CD14-positive monocyte (primary cell): ENCODE measurements at regions of chr10 and their contacts with region 1.

Region 1: DNA sequence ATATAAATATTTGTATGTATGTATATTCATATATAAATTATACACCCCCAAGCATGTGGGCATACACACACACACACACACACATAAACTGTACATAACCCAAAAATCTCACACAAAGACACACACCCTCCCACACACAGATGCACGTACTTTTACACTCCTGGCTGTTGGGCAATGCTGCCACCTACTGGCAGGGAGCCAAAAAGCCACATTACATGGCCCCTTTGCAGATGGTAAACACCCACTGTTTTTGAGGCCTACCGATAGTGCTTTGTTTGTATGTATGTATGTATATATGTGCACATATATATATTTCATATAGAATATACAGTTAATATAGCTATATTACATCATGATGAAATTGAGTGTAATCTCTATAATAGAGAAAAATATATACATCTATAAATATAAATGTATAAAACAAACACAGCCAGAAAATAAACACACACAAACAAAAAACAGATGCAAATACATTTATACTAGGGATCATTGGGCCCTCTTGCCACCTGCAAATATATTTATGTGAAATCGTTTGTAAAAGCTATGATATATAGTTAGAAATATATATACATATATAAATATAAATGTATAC is 120.1 kb upstream of the ACBD5 start:
- DNase-seq: peak; percentile 75 to 80 (median 75)
- H3K4me3 ChIP-seq: no peak overlapping the region
- H3K4me3 Mint-ChIP-seq: no peak overlapping the region
- H3K27ac ChIP-seq: no peak overlapping the region
- H3K27ac Mint-ChIP-seq: no peak overlapping the region
- H3K4me1 ChIP-seq: no peaks in the 10 kb centered on the region
- H3K4me1 Mint-ChIP-seq: peaks cover 3% of the 10 kb centered on the region
- H3K27me3 ChIP-seq: no peaks in the 10 kb centered on the region
- H3K27me3 Mint-ChIP-seq: peaks cover 0 to 1% (median 0%) of the 10 kb centered on the region in 3 donors
- CTCF ChIP-seq: peak; percentile 90

Region 2: DNA sequence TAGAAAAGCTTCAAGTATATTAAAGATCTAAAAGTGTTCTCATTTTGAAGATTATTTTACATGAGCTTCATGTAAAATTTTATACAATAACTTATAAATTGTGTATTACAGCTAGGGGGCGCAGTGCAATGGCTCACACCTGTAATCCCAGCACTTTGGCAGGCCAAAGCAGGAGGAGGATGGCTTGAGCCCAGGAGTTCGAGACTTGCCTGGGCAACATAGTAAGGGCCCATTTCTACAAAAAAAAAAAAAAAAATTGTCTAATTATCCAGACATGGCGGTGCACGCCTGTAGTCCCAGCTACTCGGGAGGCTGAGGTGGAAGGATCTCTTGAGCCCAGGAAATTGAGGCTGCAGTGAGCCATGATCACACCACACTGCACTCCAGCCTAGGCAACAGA is 136.7 kb before region 1 on chr10:
- intact Hi-C with region 1: loop called (anchors 5 to 10 kb)
- DNase-seq: peak; percentile 17 to 54 (median 51)
- H3K4me3 ChIP-seq: no peak overlapping the region
- H3K4me3 Mint-ChIP-seq: no peak overlapping the region
- H3K27ac ChIP-seq: no peak overlapping the region
- H3K27ac Mint-ChIP-seq: no peak overlapping the region
- H3K4me1 ChIP-seq: no peaks in the 10 kb centered on the region
- H3K4me1 Mint-ChIP-seq: no peaks in the 10 kb centered on the region
- H3K27me3 ChIP-seq: no peaks in the 10 kb centered on the region
- H3K27me3 Mint-ChIP-seq: peaks cover 0 to 2% (median 0%) of the 10 kb centered on the region in 3 donors
- CTCF ChIP-seq: peak; percentile 84

Region 3: GRCh38 chr10:27252267-27253000 is 108.2 kb before region 1 on chr10:
- intact Hi-C with region 1: loop called in 1 of 2 experiments (anchors 10 kb)
- DNase-seq: peak; percentile 57 to 69 (median 66)
- H3K4me3 ChIP-seq: peak overlapping the region; percentile 58 to 97 (median 83)
- H3K4me3 Mint-ChIP-seq: peak overlapping the region; percentile 82 to 86
- H3K27ac ChIP-seq: peak overlapping the region in 1 of 2 donors; percentile 85
- H3K27ac Mint-ChIP-seq: peak overlapping the region; percentile 23 to 87 (median 63)
- H3K4me1 ChIP-seq: peaks cover 2% of the 10 kb centered on the region in 2 donors
- H3K4me1 Mint-ChIP-seq: peaks cover 7% of the 10 kb centered on the region
- H3K27me3 ChIP-seq: peaks cover 2 to 7% of the 10 kb centered on the region in 2 donors
- H3K27me3 Mint-ChIP-seq: peaks cover 14 to 19% (median 18%) of the 10 kb centered on the region in 3 donors
- CTCF ChIP-seq: peak; percentile 93